ENCODE measurements at regions of chr22 and their contacts with region 1.

Region 1: GRCh38 chr22:26097840-26098239 is 71.4 kb upstream of the SEZ6L start:
- H3K4me3 ChIP-seq: no peak overlapping the region
- H3K27ac ChIP-seq: no peak overlapping the region
- H3K4me1 ChIP-seq: no peaks in the 10 kb centered on the region
- CTCF ChIP-seq: no peak

Region 2: DNA sequence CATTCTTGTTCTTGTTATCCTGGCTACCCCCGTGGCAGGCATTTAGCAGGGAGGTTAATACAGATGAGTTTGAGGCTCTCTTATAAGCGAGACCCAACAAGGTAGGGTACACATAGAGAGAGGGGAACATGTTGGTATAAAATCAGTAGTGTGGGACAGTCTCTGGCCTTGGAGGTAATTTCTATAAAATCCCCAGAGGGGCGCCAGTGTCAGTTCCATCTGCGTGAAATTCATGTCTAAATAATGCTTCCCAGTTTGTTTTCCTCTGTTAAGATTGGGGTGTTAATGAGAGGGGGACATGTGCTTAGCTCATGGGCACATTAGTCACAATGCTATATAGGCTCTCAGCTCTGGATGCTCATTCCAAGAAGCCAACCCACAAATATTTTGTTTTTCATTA is 205.2 kb before region 1 on chr22:
- CTCF ChIA-PET with region 1: interaction called, 10 read pairs
- POLR2A ChIA-PET with region 1: no interaction called
- H3K4me3 ChIP-seq: no peak overlapping the region
- H3K27ac ChIP-seq: no peak overlapping the region
- H3K4me1 ChIP-seq: no peaks in the 10 kb centered on the region
- CTCF ChIP-seq: no peak